ENCODE measurements at regions of chr10 and their contacts with region 1.

Region 1: DNA sequence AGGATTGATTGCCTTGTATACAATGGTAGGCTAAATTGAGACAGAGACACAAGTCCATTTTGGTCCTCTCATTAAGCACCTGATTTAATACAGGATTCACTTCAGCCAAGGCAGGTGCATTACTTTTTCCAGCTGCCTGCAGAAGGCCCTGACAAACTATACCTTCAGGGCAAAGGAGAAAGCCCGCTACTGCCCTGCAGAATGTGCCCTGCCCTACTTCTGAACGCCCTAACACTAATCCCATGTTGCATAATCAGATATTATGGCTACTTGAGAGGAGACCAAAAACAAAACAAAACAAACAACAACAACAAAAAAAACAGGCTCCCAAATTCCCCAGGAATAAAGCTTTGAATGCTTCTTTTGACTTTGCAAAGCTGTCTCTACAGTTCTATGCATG is 116.9 kb upstream of the ABI1 start:
- DNase-seq: no peak
- ATAC-seq: no peak
- H3K4me3 ChIP-seq: no peak overlapping the region
- H3K27ac ChIP-seq: no peak overlapping the region
- H3K4me1 ChIP-seq: no peaks in the 10 kb centered on the region
- H3K27me3 ChIP-seq: no peaks in the 10 kb centered on the region
- CTCF ChIP-seq: no peak

Region 2: GRCh38 chr10:26997610-26998009 is 20.0 kb after region 1 on chr10:
- CTCF ChIA-PET with region 1: no interaction called
- POLR2A ChIA-PET with region 1: interaction called, 21 read pairs
- intact Hi-C with region 1: no loop called
- DNase-seq: no peak
- ATAC-seq: no peak
- H3K4me3 ChIP-seq: no peak overlapping the region
- H3K27ac ChIP-seq: no peak overlapping the region
- H3K4me1 ChIP-seq: no peaks in the 10 kb centered on the region
- H3K27me3 ChIP-seq: no peaks in the 10 kb centered on the region
- CTCF ChIP-seq: no peak

Measured in PC-3 (cell line).